Activated CD4-positive, alpha-beta memory T cell treated with anti-CD3 and anti-CD28 coated beads for 36 hours (primary cell): ENCODE measurements at regions of chr11 and their contacts with region 1.

Region 1: GRCh38 chr11:128472128-128473089 is 114.9 kb downstream of the ETS1 start:
- DNase-seq: peak; percentile 83
- H3K4me3 Mint-ChIP-seq: peak overlapping the region; percentile 64
- H3K27ac Mint-ChIP-seq: peak overlapping the region; percentile 99
- H3K4me1 Mint-ChIP-seq: peaks cover 97% of the 10 kb centered on the region
- H3K27me3 Mint-ChIP-seq: no peaks in the 10 kb centered on the region

Region 2: GRCh38 chr11:128172046-128172878 is 300.1 kb before region 1 on chr11:
- CTCF ChIA-PET with region 1: interaction called, 5 read pairs
- POLR2A ChIA-PET with region 1: no interaction called
- intact Hi-C with region 1: loop called (anchors 5 kb)
- DNase-seq: peak; percentile 91
- H3K4me3 Mint-ChIP-seq: no peak overlapping the region
- H3K27ac Mint-ChIP-seq: peak overlapping the region; percentile 25
- H3K4me1 Mint-ChIP-seq: peaks cover 17% of the 10 kb centered on the region
- H3K27me3 Mint-ChIP-seq: no peaks in the 10 kb centered on the region

Region 3: DNA sequence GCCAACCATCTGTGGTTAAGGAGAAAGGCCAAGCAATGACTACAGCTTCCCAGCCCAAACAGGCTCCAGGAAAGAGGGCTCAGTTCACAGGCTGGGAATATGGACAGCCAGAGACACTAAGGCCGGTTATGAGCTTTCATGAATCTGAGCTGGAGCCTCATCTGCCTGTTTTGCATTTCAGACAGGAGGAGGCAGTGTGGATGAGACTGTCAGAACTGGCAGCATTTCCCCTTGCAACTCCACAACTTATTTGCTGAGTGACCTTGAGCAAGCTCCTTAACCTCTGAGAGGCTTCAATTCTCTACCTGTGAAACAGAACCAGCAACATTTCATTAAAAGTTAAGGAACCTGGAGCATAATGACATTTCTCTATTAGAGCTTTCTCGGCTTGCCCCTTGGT is 149.0 kb before region 1 on chr11:
- CTCF ChIA-PET with region 1: interaction called, 13 read pairs
- POLR2A ChIA-PET with region 1: interaction called, 15 read pairs
- intact Hi-C with region 1: loop called (anchors 1 kb)
- DNase-seq: peak; percentile 65
- H3K4me3 Mint-ChIP-seq: peak overlapping the region; percentile 36
- H3K27ac Mint-ChIP-seq: peak overlapping the region; percentile 94
- H3K4me1 Mint-ChIP-seq: peaks cover 88% of the 10 kb centered on the region
- H3K27me3 Mint-ChIP-seq: no peaks in the 10 kb centered on the region

Region 4: DNA sequence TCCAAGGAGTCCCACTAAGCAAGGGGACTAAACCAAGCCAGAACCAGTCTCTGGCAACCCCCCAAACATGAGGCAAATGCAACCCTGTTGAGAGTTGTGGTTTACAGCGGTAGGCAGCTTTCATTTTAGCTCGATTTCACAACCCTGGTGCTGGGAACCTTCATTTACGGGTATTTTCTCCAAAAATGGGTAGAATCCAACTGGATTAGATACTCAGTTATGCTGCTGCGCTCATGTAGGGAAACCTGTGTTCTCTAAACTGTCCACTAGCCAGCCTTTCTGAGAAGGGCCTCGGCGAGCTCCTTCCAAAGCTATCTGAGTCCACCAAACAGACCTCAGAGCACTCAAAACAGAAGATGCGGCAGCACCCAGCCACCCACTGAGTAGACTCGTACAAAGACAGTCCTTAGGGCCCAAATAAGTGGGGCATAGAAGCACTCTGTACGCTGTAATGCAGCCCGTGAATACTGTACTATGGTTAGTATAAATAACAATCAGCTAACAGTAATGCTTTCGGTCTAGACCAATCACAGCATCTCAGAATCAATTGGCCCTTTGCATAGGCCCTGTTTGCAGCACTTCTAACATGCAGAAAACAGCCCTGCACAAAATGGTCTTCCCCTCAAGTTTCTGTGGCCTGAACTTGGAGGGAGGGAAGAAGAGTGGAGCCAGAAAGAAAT is 10.2 kb after region 1 on chr11:
- CTCF ChIA-PET with region 1: interaction called, 21 read pairs
- POLR2A ChIA-PET with region 1: interaction called, 46 read pairs
- intact Hi-C with region 1: loop called (anchors 1 kb)
- DNase-seq: peak; percentile 80
- H3K4me3 Mint-ChIP-seq: peak overlapping the region; percentile 69
- H3K27ac Mint-ChIP-seq: peak overlapping the region; percentile 92
- H3K4me1 Mint-ChIP-seq: peaks cover 96% of the 10 kb centered on the region
- H3K27me3 Mint-ChIP-seq: no peaks in the 10 kb centered on the region

Region 5: DNA sequence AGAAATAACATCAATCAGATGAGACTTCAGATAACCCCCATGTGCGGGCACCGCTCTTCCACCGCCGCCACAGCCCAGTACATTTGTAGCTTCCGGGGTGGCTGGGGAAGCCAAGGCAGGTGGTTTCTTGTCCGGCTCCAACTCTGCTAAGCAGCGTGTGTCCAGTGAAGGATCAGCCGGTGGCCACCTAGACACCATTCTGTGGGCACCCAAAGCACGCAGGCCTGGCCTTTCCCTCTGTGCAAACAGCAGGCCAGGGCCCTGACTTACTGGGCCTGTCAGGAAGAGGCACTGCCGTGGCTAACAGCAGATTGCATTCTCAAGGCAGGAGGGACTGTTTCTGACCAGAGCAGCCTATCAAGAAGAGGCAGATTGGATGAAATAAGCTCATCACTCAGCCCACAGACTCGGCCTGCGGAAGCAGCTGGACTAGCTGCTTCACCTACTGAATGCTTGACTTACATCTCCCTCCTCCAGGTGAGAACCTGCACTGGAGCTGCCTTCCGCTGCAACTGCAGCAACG is 40.1 kb after region 1 on chr11:
- CTCF ChIA-PET with region 1: interaction called, 3 read pairs
- POLR2A ChIA-PET with region 1: interaction called, 86 read pairs
- intact Hi-C with region 1: loop called (anchors 2 kb)
- DNase-seq: peak; percentile 67
- H3K4me3 Mint-ChIP-seq: peak overlapping the region; percentile 97
- H3K27ac Mint-ChIP-seq: peak overlapping the region; percentile 96
- H3K4me1 Mint-ChIP-seq: peaks cover 89% of the 10 kb centered on the region
- H3K27me3 Mint-ChIP-seq: no peaks in the 10 kb centered on the region

Region 6: GRCh38 chr11:128630367-128631230 is 158.2 kb after region 1 on chr11:
- CTCF ChIA-PET with region 1: interaction called, 54 read pairs
- POLR2A ChIA-PET with region 1: interaction called, 9 read pairs
- intact Hi-C with region 1: no loop called
- DNase-seq: peak; percentile 94
- H3K4me3 Mint-ChIP-seq: peak overlapping the region; percentile 65
- H3K27ac Mint-ChIP-seq: peak overlapping the region; percentile 92
- H3K4me1 Mint-ChIP-seq: peaks cover 66% of the 10 kb centered on the region
- H3K27me3 Mint-ChIP-seq: no peaks in the 10 kb centered on the region